ENCODE measurements at regions of chr1 and their contacts with region 1.

Region 1: GRCh38 chr1:116020668-116021275 is 44.5 kb downstream of the SLC22A15 start:
- DNase-seq: peak; percentile 78
- ATAC-seq: peak; percentile 97
- H3K4me3 Mint-ChIP-seq: no peak overlapping the region
- H3K27ac Mint-ChIP-seq: no peak overlapping the region
- H3K4me1 Mint-ChIP-seq: peaks cover 4% of the 10 kb centered on the region; the same call in 1 of the 2 replicates
- H3K27me3 Mint-ChIP-seq: no peaks in the 10 kb centered on the region
- CTCF ChIP-seq: peak; percentile 79

Region 2: DNA sequence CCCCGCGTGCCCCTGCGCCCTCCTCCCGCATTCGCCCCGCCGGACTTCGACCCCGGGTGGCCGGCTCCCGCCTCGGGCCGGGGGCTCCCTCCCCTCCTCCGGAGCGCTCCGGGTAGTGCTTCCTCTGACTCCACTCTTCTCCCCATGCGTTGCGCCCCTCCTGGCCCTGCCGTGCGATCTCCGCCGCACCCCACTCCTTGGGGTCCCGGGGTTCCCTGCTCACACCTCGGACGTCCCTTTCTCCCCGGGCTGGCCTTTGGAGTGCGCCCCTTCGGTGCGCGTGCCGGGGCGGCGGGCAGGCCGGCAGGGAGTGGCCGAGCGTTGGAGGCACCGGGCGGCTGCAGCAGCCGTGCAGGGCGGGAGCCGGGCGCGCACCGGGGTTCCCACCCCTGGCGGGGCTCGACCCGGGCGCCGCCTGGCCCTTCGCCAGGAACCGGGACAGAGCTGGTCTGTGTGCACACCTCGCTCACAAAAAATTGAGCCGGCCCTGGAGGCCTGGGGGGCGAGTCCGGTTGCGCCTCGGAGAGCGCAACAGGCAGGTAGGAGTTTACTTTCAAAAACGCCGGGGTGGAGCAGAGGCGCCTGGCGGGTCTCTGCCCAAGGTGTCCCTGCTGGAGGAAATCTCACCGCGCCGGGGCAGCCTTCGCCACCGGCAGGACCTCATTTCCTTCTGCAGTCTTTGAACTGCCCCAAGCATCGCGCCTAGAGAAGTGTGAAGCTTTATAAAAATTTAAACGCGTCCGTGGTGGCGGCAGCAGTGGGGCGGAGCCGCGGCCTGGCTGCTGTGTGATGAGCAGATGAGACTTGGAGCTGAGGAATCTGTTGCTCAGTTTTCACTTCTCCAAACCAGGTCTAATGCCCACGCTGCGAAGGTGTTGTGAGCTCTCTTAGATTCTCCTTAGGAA is 378.4 kb before region 1 on chr1:
- CTCF ChIA-PET with region 1: no interaction called
- POLR2A ChIA-PET with region 1: no interaction called
- DNase-seq: peak; percentile 61
- ATAC-seq: peak; percentile 36
- H3K4me3 Mint-ChIP-seq: peak overlapping the region; percentile 83
- H3K27ac Mint-ChIP-seq: peak overlapping the region; percentile 68
- H3K4me1 Mint-ChIP-seq: peaks cover 35% of the 10 kb centered on the region
- H3K27me3 Mint-ChIP-seq: peaks cover 17% of the 10 kb centered on the region
- CTCF ChIP-seq: no peak

Region 3: GRCh38 chr1:115717541-115717940 is 303.2 kb before region 1 on chr1:
- CTCF ChIA-PET with region 1: interaction called, 10 read pairs
- POLR2A ChIA-PET with region 1: no interaction called
- DNase-seq: peak; percentile 77
- ATAC-seq: peak; percentile 53
- H3K4me3 Mint-ChIP-seq: no peak overlapping the region
- H3K27ac Mint-ChIP-seq: no peak overlapping the region
- H3K4me1 Mint-ChIP-seq: peaks cover 23% of the 10 kb centered on the region
- H3K27me3 Mint-ChIP-seq: peaks cover 3% of the 10 kb centered on the region; the same call in 1 of the 2 replicates
- CTCF ChIP-seq: peak; percentile 66

Region 4: DNA sequence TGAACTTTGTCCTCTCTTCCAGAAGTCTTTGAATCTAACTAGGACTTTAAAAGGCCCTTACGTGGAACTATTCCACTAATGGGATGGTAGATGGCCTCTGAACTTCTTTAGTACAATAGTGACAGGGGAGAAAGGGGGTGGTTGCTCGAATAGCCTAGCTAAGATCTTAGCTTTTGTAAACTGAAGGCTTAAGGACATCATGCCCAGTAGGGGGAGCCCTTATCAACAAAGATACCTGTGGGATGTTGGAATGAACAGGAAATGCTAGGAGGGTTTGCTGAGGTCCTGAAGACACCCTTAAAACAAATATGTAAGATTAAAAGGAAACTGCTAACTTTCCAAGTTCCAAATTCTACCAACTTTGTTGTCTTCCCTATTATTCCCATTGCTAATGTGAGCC is 213.0 kb before region 1 on chr1:
- CTCF ChIA-PET with region 1: interaction called, 18 read pairs
- POLR2A ChIA-PET with region 1: no interaction called
- DNase-seq: peak; percentile 48
- ATAC-seq: peak; percentile 92
- H3K4me3 Mint-ChIP-seq: no peak overlapping the region
- H3K27ac Mint-ChIP-seq: no peak overlapping the region
- H3K4me1 Mint-ChIP-seq: peaks cover 22% of the 10 kb centered on the region
- H3K27me3 Mint-ChIP-seq: no peaks in the 10 kb centered on the region
- CTCF ChIP-seq: peak; percentile 60

Region 5: DNA sequence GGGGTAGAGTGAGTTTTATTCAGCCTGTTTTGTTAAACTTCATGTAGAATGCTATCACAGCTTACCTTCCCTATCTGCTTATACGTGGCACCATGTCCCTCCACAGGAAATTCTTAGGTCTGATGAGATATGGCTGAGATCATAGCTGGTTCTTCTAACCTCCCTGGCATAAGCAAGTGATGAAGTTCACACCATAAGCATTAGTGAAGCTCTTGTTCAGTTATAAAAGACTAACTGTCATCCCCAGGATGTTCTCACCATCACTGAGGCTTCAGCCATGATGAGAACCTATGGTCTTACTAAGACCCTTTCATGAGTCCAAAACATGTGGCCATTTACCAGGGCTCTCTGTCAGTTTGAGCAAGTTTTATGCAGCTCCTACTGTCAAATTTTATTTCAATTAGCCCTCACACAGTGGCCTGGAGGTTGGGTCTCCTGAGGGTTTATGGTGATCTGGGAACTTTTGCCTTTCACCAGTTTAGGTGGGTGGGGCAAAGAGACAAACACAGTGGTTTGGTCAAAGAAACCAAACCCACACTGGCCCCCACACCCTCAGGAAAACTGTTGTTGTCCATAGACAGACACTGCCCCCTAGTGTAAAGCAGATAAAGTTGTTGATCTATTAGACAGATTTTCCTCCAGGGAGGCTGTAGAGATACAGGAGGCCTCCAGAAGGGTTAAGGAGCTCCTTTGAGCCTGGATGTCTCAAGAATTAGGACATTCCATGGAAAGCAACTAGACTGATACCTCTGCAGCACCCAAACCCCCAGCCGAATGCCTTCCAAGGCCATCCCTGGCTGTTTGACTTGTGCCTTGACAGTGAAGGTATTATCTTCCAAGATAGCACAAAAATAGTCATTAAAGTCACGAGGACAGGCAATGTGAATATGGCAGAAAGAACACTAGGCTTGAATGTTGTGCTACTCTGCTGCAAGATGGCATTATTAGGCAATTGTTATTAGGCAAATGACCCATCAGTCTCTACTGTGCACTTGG is 39.5 kb before region 1 on chr1:
- CTCF ChIA-PET with region 1: interaction called, 23 read pairs
- POLR2A ChIA-PET with region 1: no interaction called
- DNase-seq: peak; percentile 41
- ATAC-seq: peak; percentile 55
- H3K4me3 Mint-ChIP-seq: no peak overlapping the region
- H3K27ac Mint-ChIP-seq: no peak overlapping the region
- H3K4me1 Mint-ChIP-seq: peaks cover 34% of the 10 kb centered on the region
- H3K27me3 Mint-ChIP-seq: no peaks in the 10 kb centered on the region
- CTCF ChIP-seq: peak; percentile 73

Region 6: GRCh38 chr1:116008651-116009390 is 12.0 kb before region 1 on chr1:
- CTCF ChIA-PET with region 1: interaction called, 12 read pairs
- POLR2A ChIA-PET with region 1: no interaction called
- DNase-seq: no peak
- ATAC-seq: no peak
- H3K4me3 Mint-ChIP-seq: no peak overlapping the region
- H3K27ac Mint-ChIP-seq: no peak overlapping the region
- H3K4me1 Mint-ChIP-seq: peaks cover 7% of the 10 kb centered on the region
- H3K27me3 Mint-ChIP-seq: no peaks in the 10 kb centered on the region
- CTCF ChIP-seq: no peak

Region 7: DNA sequence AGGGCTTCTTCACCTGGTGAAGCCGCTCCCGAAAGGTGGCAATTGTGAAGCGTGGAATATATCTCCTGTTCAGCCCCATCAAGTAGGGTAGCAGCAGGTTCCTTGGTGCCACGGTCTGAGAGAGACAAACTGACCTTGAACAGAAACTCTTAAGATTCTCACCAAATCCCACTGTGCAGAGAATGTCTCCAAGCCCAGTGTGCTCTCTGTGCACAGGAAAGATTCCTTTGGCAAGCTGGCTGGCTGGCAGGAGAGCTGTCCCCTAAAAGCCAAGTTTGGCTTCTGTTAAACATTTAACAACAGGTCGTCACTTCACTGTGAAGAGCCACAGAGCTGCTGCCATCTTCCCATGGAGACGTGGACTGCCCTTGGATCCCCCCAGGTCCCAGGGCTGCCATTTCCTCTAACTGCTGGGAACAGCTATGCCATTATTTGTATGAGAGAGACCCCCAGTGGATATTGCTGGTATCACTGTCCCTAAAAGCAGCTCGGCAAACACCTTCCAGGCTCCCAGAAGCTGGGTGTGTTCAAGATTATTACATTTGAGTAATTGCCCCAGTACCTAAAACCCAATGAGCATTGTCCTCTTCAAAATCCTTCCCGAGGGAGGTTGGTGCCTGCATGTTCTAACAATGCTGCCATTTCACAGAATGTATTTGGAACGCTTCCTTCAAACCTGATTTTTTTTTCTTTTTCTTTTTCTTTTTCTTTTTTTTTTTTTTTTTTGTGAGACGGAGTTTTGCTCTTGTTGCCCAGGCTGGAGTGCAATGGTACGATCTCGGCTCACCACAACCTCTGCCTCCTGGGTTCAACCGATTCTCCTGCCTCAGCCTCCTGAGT is 478.2 kb after region 1 on chr1:
- CTCF ChIA-PET with region 1: interaction called, 10 read pairs
- POLR2A ChIA-PET with region 1: no interaction called
- DNase-seq: peak; percentile 68
- ATAC-seq: peak; percentile 88
- H3K4me3 Mint-ChIP-seq: no peak overlapping the region
- H3K27ac Mint-ChIP-seq: no peak overlapping the region
- H3K4me1 Mint-ChIP-seq: peaks cover 16% of the 10 kb centered on the region
- H3K27me3 Mint-ChIP-seq: no peaks in the 10 kb centered on the region
- CTCF ChIP-seq: peak; percentile 67